Spleen (tissue), 13 donors: ENCODE measurements at regions of chr4 and their contacts with region 1.

Region 1: DNA sequence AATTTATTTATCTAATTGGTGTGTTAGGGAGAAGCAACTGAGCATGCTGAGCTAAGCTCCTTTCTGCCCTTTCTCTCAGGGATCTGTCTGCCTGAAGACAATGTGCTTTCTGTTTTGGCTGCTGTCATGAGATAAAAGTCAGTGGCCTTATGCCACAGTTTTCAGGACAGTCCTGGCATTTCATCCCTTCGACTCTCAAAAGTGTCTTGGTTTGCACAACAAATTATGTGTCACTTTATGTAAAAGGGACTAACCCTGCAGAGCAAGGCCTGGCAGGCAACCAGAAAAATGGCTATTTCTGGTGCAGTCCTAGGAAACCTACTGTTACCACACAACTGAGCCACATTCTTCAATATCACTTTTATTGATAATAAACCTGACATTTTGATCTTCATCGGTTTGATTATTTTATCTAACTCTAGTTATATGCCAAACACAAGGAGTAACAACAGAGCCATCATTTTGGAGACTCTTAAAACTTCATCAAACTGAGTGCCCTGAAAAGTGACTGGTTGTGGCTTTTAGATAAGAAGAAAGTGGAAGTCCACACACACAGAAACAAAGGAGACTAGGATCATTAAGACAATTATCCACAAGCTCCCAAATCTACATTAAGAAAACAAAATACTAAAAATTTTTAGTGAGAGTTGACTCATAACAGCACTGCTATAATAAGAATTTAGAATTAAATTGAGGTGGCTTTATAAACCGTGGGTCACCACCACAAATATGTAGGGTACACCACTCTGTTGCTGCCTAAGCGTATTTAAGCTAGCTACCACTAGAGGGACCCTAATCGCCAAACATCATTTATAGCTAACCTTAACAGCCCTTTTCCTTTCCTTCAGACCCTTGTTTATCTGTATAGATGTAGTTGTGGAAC is 95.9 kb upstream of the PTPN13 start:
- DNase-seq: no peak
- H3K4me3 ChIP-seq: no peak overlapping the region
- H3K27ac ChIP-seq: no peak overlapping the region
- H3K4me1 ChIP-seq: peaks cover 0 to 11% (median 0%) of the 10 kb centered on the region in 6 donors
- H3K27me3 ChIP-seq: no peaks in the 10 kb centered on the region
- CTCF ChIP-seq: peak; percentile 31 to 77 (median 64)
- POLR2A ChIP-seq: no peak

Region 2: DNA sequence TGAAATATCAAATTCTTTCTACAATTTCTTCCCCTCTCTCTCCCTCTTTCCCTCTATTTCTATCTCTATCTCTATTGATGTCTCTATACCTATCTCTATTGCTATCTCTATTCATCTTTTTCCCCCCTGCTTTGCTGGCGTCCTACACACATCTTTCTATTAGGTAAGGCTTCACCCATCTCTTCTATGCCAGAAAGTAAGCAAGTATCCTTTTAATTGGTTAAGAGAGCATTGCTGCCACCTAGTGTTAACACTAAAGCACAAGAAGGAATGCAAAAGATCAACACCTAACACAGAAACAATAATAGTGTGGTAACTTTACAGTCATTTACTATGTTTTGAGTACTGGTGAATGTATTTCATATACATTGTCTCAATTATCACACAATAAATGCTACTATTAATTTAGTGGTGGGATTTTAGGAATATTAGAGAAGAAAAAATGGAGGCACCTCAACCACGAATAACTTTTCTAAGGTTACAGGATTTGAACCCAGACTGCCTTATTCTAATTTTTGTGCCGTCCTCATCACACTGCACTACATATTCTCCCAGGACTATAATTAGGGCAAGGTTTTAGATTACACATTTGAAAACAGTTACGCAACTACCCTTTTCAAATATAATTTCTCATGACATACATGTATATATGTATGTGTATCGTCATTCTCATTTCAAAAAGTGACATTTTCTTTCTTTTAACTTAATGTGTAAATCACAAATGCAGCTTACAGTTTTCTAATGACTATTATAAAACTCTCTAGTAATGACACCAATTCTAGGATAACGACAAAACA is 397.7 kb after region 1 on chr4:
- intact Hi-C with region 1: loop called (anchors 2 kb)
- DNase-seq: no peak
- H3K4me3 ChIP-seq: no peak overlapping the region
- H3K27ac ChIP-seq: no peak overlapping the region
- H3K4me1 ChIP-seq: peaks cover 0 to 18% (median 11%) of the 10 kb centered on the region in 6 donors
- H3K27me3 ChIP-seq: peaks cover 0 to 24% (median 5%) of the 10 kb centered on the region in 7 donors
- CTCF ChIP-seq: peak; percentile 41 to 83 (median 70)
- POLR2A ChIP-seq: no peak

Region 3: DNA sequence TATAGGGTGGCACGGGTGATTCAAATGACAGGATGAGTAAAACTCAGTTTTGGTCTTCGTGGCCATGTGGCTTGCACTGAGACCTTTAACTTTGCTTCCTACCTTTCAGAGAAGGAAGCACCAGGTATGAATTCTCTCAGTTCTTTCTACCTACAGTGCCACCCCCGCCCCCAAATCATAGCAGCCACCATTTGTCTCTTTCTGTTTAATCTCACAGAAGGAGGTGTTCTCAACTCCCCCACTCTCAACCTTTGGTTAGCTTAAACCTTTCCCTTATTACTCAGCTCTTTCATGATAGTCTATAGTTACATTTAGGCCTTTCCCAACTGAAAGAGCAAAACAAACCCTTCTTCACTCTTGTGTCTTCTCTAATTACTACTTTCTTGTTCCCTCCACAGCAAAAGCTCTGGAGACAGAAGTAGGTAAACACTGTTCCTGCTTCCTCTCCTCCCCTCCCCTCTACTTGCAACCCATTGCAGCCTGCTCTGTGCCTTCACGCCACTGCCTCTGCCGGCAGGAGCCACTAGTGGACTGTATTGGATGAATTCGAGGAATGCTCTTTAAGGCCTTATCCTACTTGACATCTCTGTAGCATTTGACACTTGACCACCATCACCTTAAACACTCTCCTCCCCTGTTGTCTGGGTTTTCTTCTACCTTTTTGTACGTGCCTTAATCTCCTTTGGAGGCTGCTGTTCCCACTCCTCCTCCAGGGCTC is 560.3 kb after region 1 on chr4:
- intact Hi-C with region 1: no loop called
- DNase-seq: no peak
- H3K4me3 ChIP-seq: no peak overlapping the region
- H3K27ac ChIP-seq: peak overlapping the region in 3 of 8 donors; percentile 17 to 44 (median 34)
- H3K4me1 ChIP-seq: peaks cover 17 to 78% (median 44%) of the 10 kb centered on the region in 6 donors
- H3K27me3 ChIP-seq: no peaks in the 10 kb centered on the region
- CTCF ChIP-seq: no peak
- POLR2A ChIP-seq: no peak

Region 4: DNA sequence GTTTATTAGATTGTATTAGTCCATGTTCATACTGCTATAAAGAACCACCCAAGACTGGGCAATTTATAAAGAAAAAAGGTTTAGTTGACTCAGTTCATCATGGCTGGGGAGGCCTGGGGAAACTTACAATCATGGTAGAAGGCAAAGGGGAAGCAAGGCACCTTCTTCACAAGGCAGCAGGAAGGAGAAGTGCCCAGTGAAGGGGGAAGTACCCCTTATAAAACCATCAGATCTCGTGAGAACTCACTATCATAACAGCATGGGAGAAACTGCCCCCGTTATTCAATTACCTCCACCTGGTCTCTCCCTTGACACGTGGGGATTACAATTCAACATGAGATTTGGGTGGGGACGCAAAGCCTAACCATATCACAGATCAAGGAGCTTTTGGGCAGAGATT is 832.5 kb after region 1 on chr4:
- intact Hi-C with region 1: no loop called
- DNase-seq: no peak
- H3K4me3 ChIP-seq: no peak overlapping the region
- H3K27ac ChIP-seq: no peak overlapping the region
- H3K4me1 ChIP-seq: no peaks in the 10 kb centered on the region
- H3K27me3 ChIP-seq: no peaks in the 10 kb centered on the region
- CTCF ChIP-seq: no peak
- POLR2A ChIP-seq: no peak